Right cardiac atrium (tissue), 5 donors: ENCODE measurements at regions of chr18 and their contacts with region 1.

Region 1: DNA sequence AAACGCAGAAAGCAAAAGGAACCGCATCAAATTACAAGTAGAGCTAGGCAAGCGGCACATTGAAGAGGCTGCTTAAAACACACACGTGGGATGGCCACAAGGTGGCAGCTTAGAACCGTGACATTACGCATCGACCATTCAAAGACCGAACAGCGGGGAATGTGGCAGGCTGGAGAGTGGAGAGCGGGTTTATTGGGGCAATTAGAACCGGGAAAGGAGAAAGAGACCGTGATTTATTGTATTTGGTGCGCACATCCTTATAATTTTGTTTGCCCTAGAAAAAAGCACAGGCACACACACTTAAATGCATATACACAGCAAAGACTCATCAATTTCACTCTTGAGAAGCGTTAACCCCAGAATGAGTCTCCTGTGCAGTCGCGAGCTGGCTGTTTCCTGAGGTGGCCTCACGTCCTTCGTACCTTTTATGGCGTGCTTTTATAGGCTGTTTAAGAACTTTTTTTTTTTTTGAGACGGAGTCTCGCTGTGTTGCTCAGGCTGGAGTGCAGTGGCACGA is 31.7 kb upstream of the MEP1B start:
- DNase-seq: peak; percentile 77 to 86 (median 80)
- ATAC-seq: peak; percentile 95
- H3K4me3 ChIP-seq: no peak overlapping the region
- H3K27ac ChIP-seq: no peak overlapping the region
- H3K4me1 ChIP-seq: no peaks in the 10 kb centered on the region
- H3K27me3 ChIP-seq: no peaks in the 10 kb centered on the region

Region 2: DNA sequence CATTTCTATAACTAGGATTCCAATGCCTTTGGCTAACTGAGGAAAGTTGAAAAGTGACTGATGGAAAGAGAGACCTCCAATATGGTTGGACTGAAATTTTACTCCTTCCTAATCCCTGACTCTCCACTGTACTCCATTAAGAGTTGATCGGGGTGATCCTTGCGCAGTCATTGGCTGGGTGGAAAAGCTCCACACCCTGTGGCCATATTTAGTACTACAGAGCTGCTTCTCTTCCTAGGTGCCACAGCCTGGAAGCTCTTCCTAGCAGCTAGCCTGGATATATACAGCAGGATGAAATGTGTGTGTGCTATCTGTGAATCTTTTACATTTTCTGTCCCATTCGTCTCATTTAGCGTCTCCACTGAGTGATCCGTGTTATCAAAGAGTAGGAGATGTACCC is 102.8 kb after region 1 on chr18:
- intact Hi-C with region 1: loop called in 1 of 4 experiments (anchors 10 kb)
- DNase-seq: no peak
- ATAC-seq: no peak
- H3K4me3 ChIP-seq: no peak overlapping the region
- H3K27ac ChIP-seq: no peak overlapping the region
- H3K4me1 ChIP-seq: no peaks in the 10 kb centered on the region
- H3K27me3 ChIP-seq: no peaks in the 10 kb centered on the region